ENCODE measurements at regions of chr7 and their contacts with region 1.

Region 1: GRCh38 chr7:36152756-36153570 is at the start of gene EEPD1:
- DNase-seq: peak; percentile 100
- H3K4me3 Mint-ChIP-seq: peak within 1 kb of the TSS; percentile 93
- H3K27ac Mint-ChIP-seq: peak within 1 kb of the TSS; percentile 74
- H3K4me1 Mint-ChIP-seq: peaks cover 57% of the 10 kb centered on the region
- H3K27me3 Mint-ChIP-seq: no peaks in the 10 kb centered on the region
- CTCF ChIP-seq: peak; percentile 11
- total RNA-seq, gene EEPD1: 48.8 and 55.5 TPM in 2 replicates

Region 2: DNA sequence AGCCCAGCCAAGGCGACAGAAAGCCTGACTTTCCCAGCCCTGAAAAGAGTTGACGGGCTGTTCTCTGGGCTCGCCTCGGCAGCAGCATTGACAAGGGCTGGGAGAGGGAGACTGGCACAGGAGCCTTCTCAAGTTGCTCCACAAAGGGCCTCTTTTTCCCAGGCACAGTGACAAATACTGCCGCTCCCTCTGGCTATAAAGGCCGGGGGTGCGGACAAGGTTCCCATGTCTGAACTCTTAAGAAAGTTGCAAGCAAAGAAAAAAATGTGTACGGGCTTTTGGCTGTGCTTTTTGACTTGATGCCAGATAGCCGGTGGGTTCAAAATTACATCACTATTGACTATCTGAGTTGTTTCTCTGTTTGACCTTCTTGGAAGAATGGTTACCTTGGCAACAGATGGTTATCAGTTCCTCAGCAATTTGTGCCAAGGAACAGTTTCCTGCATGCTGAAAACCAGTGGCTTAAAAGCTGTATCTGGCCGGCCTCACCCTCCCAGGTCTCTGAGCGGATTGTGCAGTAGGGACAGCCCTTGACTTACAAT is 115.8 kb before region 1 on chr7:
- CTCF ChIA-PET with region 1: interaction called, 10 read pairs
- intact Hi-C with region 1: loop called (anchors 5 kb)
- DNase-seq: peak; percentile 86
- H3K4me3 Mint-ChIP-seq: no peak overlapping the region
- H3K27ac Mint-ChIP-seq: peak overlapping the region; percentile 16
- H3K4me1 Mint-ChIP-seq: peaks cover 54% of the 10 kb centered on the region
- H3K27me3 Mint-ChIP-seq: no peaks in the 10 kb centered on the region
- CTCF ChIP-seq: no peak

Region 3: GRCh38 chr7:36128448-36129047 is 24.4 kb before region 1 on chr7:
- CTCF ChIA-PET with region 1: interaction called, 3 read pairs
- intact Hi-C with region 1: loop called (anchors 2 kb)
- DNase-seq: peak; percentile 91
- H3K4me3 Mint-ChIP-seq: peak overlapping the region; percentile 52
- H3K27ac Mint-ChIP-seq: peak overlapping the region; percentile 76
- H3K4me1 Mint-ChIP-seq: peaks cover 38% of the 10 kb centered on the region
- H3K27me3 Mint-ChIP-seq: no peaks in the 10 kb centered on the region
- CTCF ChIP-seq: peak; percentile 91

Region 4: GRCh38 chr7:36265680-36266079 is 112.7 kb after region 1 on chr7:
- CTCF ChIA-PET with region 1: no interaction called
- intact Hi-C with region 1: no loop called
- DNase-seq: no peak
- H3K4me3 Mint-ChIP-seq: no peak overlapping the region
- H3K27ac Mint-ChIP-seq: no peak overlapping the region
- H3K4me1 Mint-ChIP-seq: peaks cover 70% of the 10 kb centered on the region
- H3K27me3 Mint-ChIP-seq: no peaks in the 10 kb centered on the region
- CTCF ChIP-seq: no peak